Dendritic cell treated with granulocyte-macrophage colony-stimulating factor and Interleukin-4, amounts not matched to agents 40 ng/mL and 50 ng/mL, for 4 days (primary cell): ENCODE measurements at regions of chr16 and their contacts with region 1.

Region 1: DNA sequence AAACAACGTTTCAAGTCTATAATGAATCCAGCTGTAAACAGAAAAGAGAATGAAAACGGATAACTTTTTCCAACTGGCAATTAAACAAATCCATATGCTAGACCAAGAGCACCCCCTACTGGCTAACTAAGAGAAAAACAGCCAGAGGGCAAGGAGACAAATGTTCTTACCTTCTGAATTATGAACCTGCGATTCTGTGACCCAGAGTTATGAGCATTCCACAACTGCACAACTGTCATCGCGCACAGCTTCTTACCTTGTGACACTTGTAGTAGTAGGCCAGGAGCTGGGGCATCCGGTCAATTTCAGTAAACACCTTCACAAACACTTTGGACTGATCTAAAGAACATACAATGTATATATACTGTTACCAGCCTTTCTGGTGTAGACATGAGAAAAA is 18.6 kb downstream of the COG7 start:
- H3K4me3 Mint-ChIP-seq: no peak overlapping the region
- H3K27ac Mint-ChIP-seq: no peak overlapping the region
- H3K4me1 Mint-ChIP-seq: peaks cover 9% of the 10 kb centered on the region
- H3K27me3 Mint-ChIP-seq: no peaks in the 10 kb centered on the region

Region 2: DNA sequence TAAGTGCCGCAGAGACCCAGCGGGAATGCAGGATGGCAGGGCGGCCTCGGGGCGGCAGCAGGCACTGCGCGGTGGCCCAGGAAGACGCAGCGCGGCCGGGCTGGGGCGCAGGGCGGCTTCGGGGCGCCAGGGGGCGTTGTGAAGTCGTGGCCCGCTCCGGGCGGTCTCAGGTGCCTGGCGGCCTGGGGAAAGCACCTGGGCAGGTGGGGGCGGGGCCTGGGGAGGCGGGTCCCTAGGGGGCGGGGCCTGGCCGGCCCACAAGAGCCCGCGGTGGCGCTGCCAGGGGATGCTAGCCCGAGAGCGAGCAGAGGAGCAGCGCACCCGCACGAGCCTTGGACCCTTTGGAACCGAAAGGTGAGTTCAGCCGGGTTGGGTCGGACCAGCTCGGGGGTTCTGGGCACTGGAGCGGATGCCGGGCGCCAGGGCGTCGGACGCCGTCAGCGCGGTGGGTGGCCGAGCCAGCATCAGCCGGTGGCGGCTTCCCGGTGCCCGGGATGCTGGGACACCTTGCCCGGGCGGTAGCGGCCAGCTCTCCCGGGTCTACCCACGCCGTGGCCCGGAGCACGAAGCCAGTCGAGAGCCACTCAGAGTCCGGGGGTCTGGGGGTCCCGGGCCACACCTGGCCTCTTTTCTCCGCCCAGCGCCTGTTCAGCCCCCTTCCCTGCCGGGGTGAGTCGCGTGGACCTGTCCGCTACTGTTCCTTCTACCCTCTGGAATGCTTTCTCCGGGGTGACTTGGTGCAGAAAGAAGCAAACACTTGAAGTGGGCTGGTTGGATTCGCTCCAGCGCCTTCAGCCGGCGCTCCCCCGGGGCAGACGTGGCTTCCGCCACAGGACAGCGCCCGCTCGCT is 251.7 kb before region 1 on chr16 and contains the start of gene SCNN1G:
- intact Hi-C with region 1: loop called (anchors 1 kb)
- H3K4me3 Mint-ChIP-seq: no peak within 1 kb of the TSS
- H3K27ac Mint-ChIP-seq: no peak within 1 kb of the TSS
- H3K4me1 Mint-ChIP-seq: peaks cover 7% of the 10 kb centered on the region
- H3K27me3 Mint-ChIP-seq: peaks cover 66% of the 10 kb centered on the region

Region 3: GRCh38 chr16:23324730-23325129 is 109.7 kb before region 1 on chr16:
- intact Hi-C with region 1: no loop called
- H3K4me3 Mint-ChIP-seq: no peak overlapping the region
- H3K27ac Mint-ChIP-seq: no peak overlapping the region
- H3K4me1 Mint-ChIP-seq: no peaks in the 10 kb centered on the region
- H3K27me3 Mint-ChIP-seq: peaks cover 5% of the 10 kb centered on the region